ENCODE measurements at regions of chr11 and their contacts with region 1.

Region 1: DNA sequence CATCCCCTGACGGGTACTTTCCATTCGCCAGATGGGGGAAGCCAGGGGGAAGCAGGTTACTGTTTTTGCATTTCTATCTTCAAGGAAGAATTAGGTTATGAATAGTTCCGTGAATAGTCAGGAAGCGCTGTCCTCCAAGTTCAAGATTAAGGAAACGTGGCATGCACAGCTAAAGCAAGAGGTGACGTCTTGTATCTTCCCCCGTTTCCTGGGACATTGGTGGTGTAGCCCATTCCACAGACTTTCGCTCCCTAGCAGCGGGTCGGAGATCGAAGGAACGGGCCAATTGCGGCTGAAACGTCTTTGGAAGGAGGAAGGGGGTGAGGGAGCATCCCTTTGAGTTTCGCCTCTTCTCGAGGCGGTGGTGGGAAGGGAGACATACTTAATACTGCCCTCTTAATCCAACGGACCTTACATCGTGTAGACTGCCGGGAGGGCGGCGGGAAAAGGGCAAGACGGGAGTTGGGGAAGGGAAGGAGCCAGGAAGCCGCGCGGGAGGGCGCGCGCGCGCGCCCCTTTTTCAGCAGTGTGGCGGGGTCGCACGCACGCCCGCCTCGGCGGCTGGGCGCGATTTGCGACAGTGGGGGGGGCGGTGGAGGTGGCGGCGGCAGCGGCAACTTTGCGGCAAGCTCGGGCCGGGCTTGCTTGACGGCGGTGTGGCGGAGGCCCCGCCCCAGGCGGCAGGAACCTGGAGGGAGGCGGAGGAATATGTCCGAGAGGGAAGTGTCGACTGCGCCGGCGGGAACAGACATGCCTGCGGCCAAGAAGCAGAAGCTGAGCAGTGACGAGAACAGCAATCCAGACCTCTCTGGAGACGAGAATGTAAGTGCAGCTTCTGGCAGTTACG is at the start of gene EED:
- DNase-seq: peak; percentile 99
- H3K4me3 ChIP-seq: peak within 1 kb of the TSS; percentile 83
- H3K27ac ChIP-seq: peak within 1 kb of the TSS; percentile 99
- H3K4me1 ChIP-seq: peaks cover 20% of the 10 kb centered on the region
- H3K27me3 ChIP-seq: no peaks in the 10 kb centered on the region
- CTCF ChIP-seq: no peak
- total RNA-seq, gene EED: 37.5 and 43.4 TPM in 2 replicates

Region 2: DNA sequence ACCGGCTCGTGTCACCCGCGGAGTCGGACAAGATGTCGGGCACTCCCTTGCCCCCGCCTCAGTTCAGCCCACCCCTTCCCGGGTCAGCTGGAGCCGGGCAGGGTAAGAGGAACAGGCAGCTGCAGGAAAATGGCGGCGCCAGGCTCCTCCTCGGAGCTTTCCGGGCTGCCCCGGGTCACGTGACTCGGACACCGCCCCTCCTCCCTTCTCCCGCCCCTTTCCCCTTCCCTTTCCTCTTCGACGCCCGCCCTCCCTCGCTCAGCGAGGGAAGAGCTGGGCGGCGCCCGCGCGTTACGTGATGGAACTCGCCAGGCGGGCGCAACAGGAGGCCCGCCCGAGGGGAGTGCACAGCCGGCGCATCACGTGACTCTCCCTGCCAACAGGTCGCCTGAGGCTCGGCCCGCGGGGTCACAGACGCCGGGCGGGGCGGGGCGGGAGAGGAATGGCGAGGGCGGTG is 175.8 kb before region 1 on chr11 and contains the start of gene PICALM:
- CTCF ChIA-PET with region 1: no interaction called
- POLR2A ChIA-PET with region 1: no interaction called
- intact Hi-C with region 1: loop called (anchors 5 kb)
- DNase-seq: peak; percentile 100
- H3K4me3 ChIP-seq: peak within 1 kb of the TSS; percentile 76
- H3K27ac ChIP-seq: peak within 1 kb of the TSS; percentile 90
- H3K4me1 ChIP-seq: peaks cover 34% of the 10 kb centered on the region
- H3K27me3 ChIP-seq: no peaks in the 10 kb centered on the region
- CTCF ChIP-seq: no peak
- total RNA-seq, gene PICALM: 168 and 174 TPM in 2 replicates

Region 3: GRCh38 chr11:86218125-86219084 is 26.3 kb before region 1 on chr11:
- CTCF ChIA-PET with region 1: no interaction called
- POLR2A ChIA-PET with region 1: no interaction called
- intact Hi-C with region 1: no loop called
- DNase-seq: peak; percentile 89
- H3K4me3 ChIP-seq: no peak overlapping the region
- H3K27ac ChIP-seq: no peak overlapping the region
- H3K4me1 ChIP-seq: peaks cover 10% of the 10 kb centered on the region
- H3K27me3 ChIP-seq: no peaks in the 10 kb centered on the region
- CTCF ChIP-seq: peak; percentile 97